Caco-2 (cell line): ENCODE measurements at regions of chr3 and their contacts with region 1.

Region 1: DNA sequence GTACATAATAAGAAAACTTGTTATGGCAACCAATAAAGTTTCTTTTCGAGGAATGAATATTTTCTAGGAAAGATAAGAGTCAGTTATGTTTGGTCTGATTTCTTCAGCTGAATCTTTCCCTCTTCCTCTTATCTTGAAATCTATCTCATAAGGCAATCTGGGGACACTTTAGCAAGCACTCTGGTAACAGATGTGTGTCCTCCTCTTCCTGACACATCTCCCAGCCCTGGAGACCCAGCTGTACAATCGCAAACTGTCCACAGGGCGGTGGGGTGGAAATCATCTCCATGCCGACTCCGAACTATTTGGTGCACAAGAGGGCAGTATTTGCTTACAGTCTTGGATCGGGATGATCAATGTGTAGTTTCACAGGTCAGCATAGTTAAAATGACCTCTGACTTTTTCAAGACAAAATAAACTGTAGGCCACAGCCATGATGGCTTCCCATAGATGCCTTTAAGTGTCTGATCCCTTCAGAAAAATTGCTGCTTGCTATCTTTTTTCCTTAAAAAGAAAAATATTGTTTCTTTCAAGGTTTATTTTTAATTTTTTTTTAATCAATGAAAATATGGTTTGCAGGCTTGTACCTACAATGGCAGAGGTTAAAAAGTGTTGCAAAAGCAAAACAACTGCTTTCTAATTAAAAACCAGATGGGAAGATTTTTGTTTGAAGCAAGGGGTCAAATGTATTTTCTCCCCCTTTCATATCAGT is 17.7 kb downstream of the EEFSEC start:
- DNase-seq: peak; percentile 81 to 83
- H3K4me3 ChIP-seq: no peak overlapping the region
- H3K4me3 Mint-ChIP-seq: no peak overlapping the region
- H3K27ac Mint-ChIP-seq: peak overlapping the region; percentile 20
- H3K4me1 ChIP-seq: peaks cover 32% of the 10 kb centered on the region
- H3K4me1 Mint-ChIP-seq: peaks cover 22% of the 10 kb centered on the region
- H3K27me3 ChIP-seq: no peaks in the 10 kb centered on the region
- H3K27me3 Mint-ChIP-seq: no peaks in the 10 kb centered on the region
- CTCF ChIP-seq: peak; percentile 76 to 93

Region 2: GRCh38 chr3:128503164-128503651 is 332.2 kb after region 1 on chr3:
- CTCF ChIA-PET with region 1: no interaction called
- POLR2A ChIA-PET with region 1: no interaction called
- intact Hi-C with region 1: loop called (anchors 2 kb)
- DNase-seq: peak in 1 of 2 experiments; percentile 54
- H3K4me3 ChIP-seq: no peak overlapping the region
- H3K4me3 Mint-ChIP-seq: no peak overlapping the region
- H3K27ac Mint-ChIP-seq: no peak overlapping the region
- H3K4me1 ChIP-seq: peaks cover 16% of the 10 kb centered on the region
- H3K4me1 Mint-ChIP-seq: peaks cover 8% of the 10 kb centered on the region
- H3K27me3 ChIP-seq: no peaks in the 10 kb centered on the region
- H3K27me3 Mint-ChIP-seq: no peaks in the 10 kb centered on the region
- CTCF ChIP-seq: peak in 1 of 2 experiments; percentile 59

Region 3: GRCh38 chr3:128515967-128516366 is 345.0 kb after region 1 on chr3:
- CTCF ChIA-PET with region 1: no interaction called
- POLR2A ChIA-PET with region 1: no interaction called
- intact Hi-C with region 1: no loop called
- DNase-seq: no peak
- H3K4me3 ChIP-seq: no peak overlapping the region
- H3K4me3 Mint-ChIP-seq: no peak overlapping the region
- H3K27ac Mint-ChIP-seq: no peak overlapping the region
- H3K4me1 ChIP-seq: no peaks in the 10 kb centered on the region
- H3K4me1 Mint-ChIP-seq: no peaks in the 10 kb centered on the region
- H3K27me3 ChIP-seq: no peaks in the 10 kb centered on the region
- H3K27me3 Mint-ChIP-seq: peaks cover 9% of the 10 kb centered on the region
- CTCF ChIP-seq: no peak